BJ (cell line): ENCODE measurements at regions of chr2 and their contacts with region 1.

Region 1: GRCh38 chr2:70948337-70949003 is 12.8 kb downstream of the ATP6V1B1 start:
- DNase-seq: no peak
- H3K4me3 ChIP-seq: no peak overlapping the region
- H3K27me3 ChIP-seq: no peaks in the 10 kb centered on the region
- CTCF ChIP-seq: peak; percentile 95

Region 2: GRCh38 chr2:70887550-70888246 is 60.8 kb before region 1 on chr2:
- CTCF ChIA-PET with region 1: interaction called, 13 read pairs
- POLR2A ChIA-PET with region 1: no interaction called
- DNase-seq: no peak
- H3K4me3 ChIP-seq: peak overlapping the region; percentile 25
- H3K27me3 ChIP-seq: peaks cover 64% of the 10 kb centered on the region
- CTCF ChIP-seq: no peak

Region 3: DNA sequence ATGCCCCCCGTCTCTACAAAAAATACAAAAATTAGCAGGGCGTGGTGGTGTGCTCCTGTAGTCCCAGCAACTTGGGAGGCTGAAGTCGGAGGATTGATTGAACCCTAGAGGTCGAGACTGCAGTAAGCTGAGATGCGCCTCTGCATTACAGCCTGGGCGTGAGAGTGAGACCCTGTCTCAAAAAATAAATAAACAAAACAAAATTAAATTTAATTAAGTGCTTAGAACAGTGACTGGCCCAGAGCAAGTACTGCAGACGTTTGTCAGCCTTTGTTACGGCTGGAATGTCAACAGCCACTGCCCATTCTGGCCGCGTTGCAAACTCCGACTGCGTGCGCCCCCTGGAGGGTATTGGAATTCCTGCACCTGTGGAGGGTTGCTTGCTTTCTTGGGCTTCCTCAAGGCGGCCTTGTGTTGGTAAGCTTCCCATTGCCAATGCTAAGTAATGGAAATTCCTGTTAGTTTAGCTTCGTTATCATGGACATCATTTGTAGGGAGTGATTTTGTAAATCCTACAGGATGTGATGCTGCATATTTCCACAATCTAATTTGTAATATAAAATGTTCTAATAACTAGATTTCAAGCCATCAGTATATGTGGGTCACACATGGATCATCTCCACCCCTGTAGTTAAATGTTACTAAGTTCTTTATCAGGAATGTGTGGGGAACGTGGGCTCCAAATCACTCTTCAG is 28.7 kb before region 1 on chr2:
- CTCF ChIA-PET with region 1: interaction called, 63 read pairs
- POLR2A ChIA-PET with region 1: no interaction called
- DNase-seq: peak; percentile 27
- H3K4me3 ChIP-seq: no peak overlapping the region
- H3K27me3 ChIP-seq: no peaks in the 10 kb centered on the region
- CTCF ChIP-seq: peak; percentile 92

Region 4: GRCh38 chr2:70935468-70936164 is 12.9 kb before region 1 on chr2 and contains the start of gene ATP6V1B1:
- CTCF ChIA-PET with region 1: interaction called, 64 read pairs
- POLR2A ChIA-PET with region 1: no interaction called
- DNase-seq: no peak
- H3K4me3 ChIP-seq: no peak within 1 kb of the TSS
- H3K27me3 ChIP-seq: peaks cover 3% of the 10 kb centered on the region; the same call in 1 of the 2 replicates
- CTCF ChIP-seq: no peak
- polyA plus RNA-seq, gene ATP6V1B1: 0.85 and 1.3 TPM in 2 replicates

Region 5: GRCh38 chr2:70964596-70965386 is 16.3 kb after region 1 on chr2:
- CTCF ChIA-PET with region 1: interaction called, 46 read pairs
- POLR2A ChIA-PET with region 1: no interaction called
- DNase-seq: no peak
- H3K4me3 ChIP-seq: peak overlapping the region; percentile 37
- H3K27me3 ChIP-seq: peaks cover 1% of the 10 kb centered on the region; the same call in 1 of the 2 replicates
- CTCF ChIP-seq: peak; percentile 83

Region 6: DNA sequence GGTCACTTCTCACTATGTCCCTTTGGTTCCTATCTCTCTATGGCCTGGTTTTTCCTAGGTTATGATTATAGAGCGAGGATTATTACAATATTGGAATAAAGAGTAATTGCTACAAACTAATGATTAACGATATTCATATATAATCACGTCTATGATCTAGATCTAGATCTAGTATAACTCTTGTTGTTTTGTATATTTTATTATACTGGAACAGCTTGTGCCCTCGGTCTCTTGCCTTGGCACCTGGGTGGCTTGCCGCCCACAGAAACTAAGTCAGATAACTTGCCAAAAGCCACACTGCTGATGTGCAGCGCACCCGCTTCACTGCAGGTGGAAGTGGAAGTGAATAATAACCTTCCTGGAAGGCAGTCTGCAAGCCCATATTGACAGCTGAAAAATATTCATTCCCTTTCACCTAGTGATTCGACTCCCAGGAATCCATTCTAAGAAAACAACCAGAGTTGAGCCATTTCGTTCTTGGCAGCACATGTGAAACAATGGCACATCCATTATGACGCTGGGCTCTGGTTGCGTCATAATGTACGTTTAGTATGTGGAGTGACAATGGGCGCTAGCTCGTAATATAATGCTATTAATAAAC is 29.2 kb after region 1 on chr2:
- CTCF ChIA-PET with region 1: interaction called, 10 read pairs
- POLR2A ChIA-PET with region 1: interaction called, 3 read pairs
- DNase-seq: peak; percentile 24
- H3K4me3 ChIP-seq: peak overlapping the region; percentile 51
- H3K27me3 ChIP-seq: no peaks in the 10 kb centered on the region
- CTCF ChIP-seq: no peak